GM12878 (cell line): ENCODE measurements at regions of chr10 and their contacts with region 1.

Region 1: GRCh38 chr10:74738985-74739567 is 87.3 kb upstream of the KAT6B start:
- DNase-seq: peak; percentile 94
- ATAC-seq: peak; percentile 93
- H3K4me3 ChIP-seq: peak overlapping the region; percentile 42; the same call in 1 of the 2 replicates
- H3K27ac ChIP-seq: peak overlapping the region; percentile 97
- H3K4me1 ChIP-seq: peaks cover 24% of the 10 kb centered on the region
- H3K27me3 ChIP-seq: no peaks in the 10 kb centered on the region
- CTCF ChIP-seq: peak; percentile 48 to 61 (median 50)
- EP300 ChIP-seq: peak in 1 of 2 experiments; percentile 31; a peak in 2 of 4 replicates
- POLR2A ChIP-seq: no peak
- RAD21 ChIP-seq: peak; percentile 77

Region 2: GRCh38 chr10:73899423-73899822 is 839.7 kb before region 1 on chr10:
- CTCF ChIA-PET with region 1: no interaction called
- POLR2A ChIA-PET with region 1: no interaction called
- RAD21 ChIA-PET with region 1: no interaction called
- SMC1A ChIA-PET with region 1: no interaction called
- in situ Hi-C with region 1: no loop called
- intact Hi-C with region 1: no loop called
- DNase-seq: no peak
- ATAC-seq: no peak
- H3K4me3 ChIP-seq: no peak overlapping the region
- H3K27ac ChIP-seq: no peak overlapping the region
- H3K4me1 ChIP-seq: no peaks in the 10 kb centered on the region
- H3K27me3 ChIP-seq: no peaks in the 10 kb centered on the region; a peak in 1 of 4 replicates
- CTCF ChIP-seq: no peak
- EP300 ChIP-seq: no peak
- POLR2A ChIP-seq: no peak
- RAD21 ChIP-seq: no peak

Region 3: DNA sequence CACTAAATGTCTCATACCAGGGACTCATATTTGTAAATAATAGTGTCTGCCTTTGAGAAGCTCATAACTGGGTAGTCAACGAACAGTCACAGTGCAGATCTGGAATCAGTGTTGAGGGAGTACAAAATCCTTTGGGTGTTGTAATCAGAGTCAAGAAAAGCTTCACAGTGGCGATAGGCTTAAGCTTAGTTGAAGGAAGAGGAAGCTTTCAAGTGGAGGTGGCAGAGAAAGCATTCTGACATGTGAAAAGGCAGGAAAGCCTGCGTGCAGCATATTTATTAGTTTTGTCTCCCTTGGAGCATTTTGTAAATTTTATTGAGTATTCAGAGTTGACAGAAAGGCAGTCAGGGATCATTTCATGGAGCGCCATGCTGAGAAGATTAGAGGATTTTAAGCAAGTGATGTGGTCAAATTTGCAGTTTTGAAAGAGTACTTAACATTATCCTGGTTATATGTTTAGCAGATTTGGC is 483.2 kb before region 1 on chr10:
- CTCF ChIA-PET with region 1: interaction called, 3 read pairs
- POLR2A ChIA-PET with region 1: no interaction called
- RAD21 ChIA-PET with region 1: no interaction called
- SMC1A ChIA-PET with region 1: interaction called, 6 read pairs
- in situ Hi-C with region 1: loop called (anchors 25 kb)
- intact Hi-C with region 1: no loop called
- DNase-seq: no peak
- ATAC-seq: no peak; the same call in 2 of the 3 replicates
- H3K4me3 ChIP-seq: no peak overlapping the region
- H3K27ac ChIP-seq: no peak overlapping the region
- H3K4me1 ChIP-seq: 0 out of 2 replicates have a peak, but pooled peaks cover 3% of the 10 kb centered on the region
- H3K27me3 ChIP-seq: no peaks in the 10 kb centered on the region
- CTCF ChIP-seq: no peak
- EP300 ChIP-seq: no peak
- POLR2A ChIP-seq: no peak
- RAD21 ChIP-seq: no peak

Region 4: GRCh38 chr10:74419958-74420375 is 319.1 kb before region 1 on chr10:
- CTCF ChIA-PET with region 1: interaction called, 36 read pairs
- POLR2A ChIA-PET with region 1: no interaction called
- RAD21 ChIA-PET with region 1: interaction called, 34 read pairs
- SMC1A ChIA-PET with region 1: interaction called, 31 read pairs
- in situ Hi-C with region 1: no loop called
- intact Hi-C with region 1: loop called (anchors 1 kb)
- DNase-seq: peak; percentile 5
- ATAC-seq: peak; percentile 84
- H3K4me3 ChIP-seq: no peak overlapping the region
- H3K27ac ChIP-seq: no peak overlapping the region
- H3K4me1 ChIP-seq: no peaks in the 10 kb centered on the region
- H3K27me3 ChIP-seq: no peaks in the 10 kb centered on the region
- CTCF ChIP-seq: peak; percentile 16 to 44 (median 38); a peak in 4 of 6 replicates
- EP300 ChIP-seq: no peak
- POLR2A ChIP-seq: no peak
- RAD21 ChIP-seq: 0 out of 2 replicates have a peak, but pooled peaks have one; percentile 29

Region 5: GRCh38 chr10:74677951-74678350 is 61.1 kb before region 1 on chr10:
- CTCF ChIA-PET with region 1: interaction called, 42 read pairs
- POLR2A ChIA-PET with region 1: interaction called, 4 read pairs
- RAD21 ChIA-PET with region 1: interaction called, 34 read pairs
- SMC1A ChIA-PET with region 1: interaction called, 53 read pairs
- in situ Hi-C with region 1: no loop called
- intact Hi-C with region 1: loop called (anchors 5 kb)
- DNase-seq: peak; percentile 74
- ATAC-seq: peak; percentile 93
- H3K4me3 ChIP-seq: no peak overlapping the region
- H3K27ac ChIP-seq: peak overlapping the region; percentile 52; the same call in 1 of the 2 replicates
- H3K4me1 ChIP-seq: peaks cover 41% of the 10 kb centered on the region
- H3K27me3 ChIP-seq: no peaks in the 10 kb centered on the region
- CTCF ChIP-seq: 0 out of 6 replicates have a peak, but pooled peaks of 1 of the 3 experiments have one; percentile 6
- EP300 ChIP-seq: no peak; a peak in 1 of 4 replicates
- POLR2A ChIP-seq: no peak
- RAD21 ChIP-seq: peak; percentile 26; the same call in 1 of the 2 replicates

Region 6: GRCh38 chr10:74753442-74754211 is 14.6 kb after region 1 on chr10:
- CTCF ChIA-PET with region 1: interaction called, 16 read pairs
- POLR2A ChIA-PET with region 1: no interaction called
- RAD21 ChIA-PET with region 1: interaction called, 21 read pairs
- SMC1A ChIA-PET with region 1: interaction called, 17 read pairs
- in situ Hi-C with region 1: no loop called
- intact Hi-C with region 1: no loop called
- DNase-seq: no peak
- ATAC-seq: no peak
- H3K4me3 ChIP-seq: no peak overlapping the region
- H3K27ac ChIP-seq: no peak overlapping the region
- H3K4me1 ChIP-seq: peaks cover 4% of the 10 kb centered on the region; the same call in 1 of the 2 replicates
- H3K27me3 ChIP-seq: no peaks in the 10 kb centered on the region
- CTCF ChIP-seq: no peak
- EP300 ChIP-seq: no peak
- POLR2A ChIP-seq: no peak
- RAD21 ChIP-seq: no peak

Region 7: GRCh38 chr10:74977913-74978847 is 239.1 kb after region 1 on chr10:
- CTCF ChIA-PET with region 1: interaction called, 8 read pairs
- POLR2A ChIA-PET with region 1: no interaction called
- RAD21 ChIA-PET with region 1: interaction called, 6 read pairs
- SMC1A ChIA-PET with region 1: interaction called, 22 read pairs
- in situ Hi-C with region 1: no loop called
- intact Hi-C with region 1: no loop called
- DNase-seq: peak; percentile 86
- ATAC-seq: peak; percentile 92
- H3K4me3 ChIP-seq: peak overlapping the region; percentile 41
- H3K27ac ChIP-seq: peak overlapping the region; percentile 81
- H3K4me1 ChIP-seq: peaks cover 42% of the 10 kb centered on the region
- H3K27me3 ChIP-seq: no peaks in the 10 kb centered on the region
- CTCF ChIP-seq: no peak
- EP300 ChIP-seq: peak; percentile 98 to 99
- POLR2A ChIP-seq: no peak
- RAD21 ChIP-seq: peak; percentile 20; the same call in 1 of the 2 replicates

Region 8: GRCh38 chr10:75083972-75084833 is 345.1 kb after region 1 on chr10:
- CTCF ChIA-PET with region 1: no interaction called
- POLR2A ChIA-PET with region 1: no interaction called
- RAD21 ChIA-PET with region 1: no interaction called
- SMC1A ChIA-PET with region 1: no interaction called
- in situ Hi-C with region 1: no loop called
- intact Hi-C with region 1: no loop called
- DNase-seq: no peak
- ATAC-seq: no peak
- H3K4me3 ChIP-seq: no peak overlapping the region
- H3K27ac ChIP-seq: no peak overlapping the region
- H3K4me1 ChIP-seq: no peaks in the 10 kb centered on the region
- H3K27me3 ChIP-seq: no peaks in the 10 kb centered on the region
- CTCF ChIP-seq: no peak
- EP300 ChIP-seq: no peak
- POLR2A ChIP-seq: no peak
- RAD21 ChIP-seq: no peak